ENCODE measurements at regions of chr7 and their contacts with region 1.

Region 1: DNA sequence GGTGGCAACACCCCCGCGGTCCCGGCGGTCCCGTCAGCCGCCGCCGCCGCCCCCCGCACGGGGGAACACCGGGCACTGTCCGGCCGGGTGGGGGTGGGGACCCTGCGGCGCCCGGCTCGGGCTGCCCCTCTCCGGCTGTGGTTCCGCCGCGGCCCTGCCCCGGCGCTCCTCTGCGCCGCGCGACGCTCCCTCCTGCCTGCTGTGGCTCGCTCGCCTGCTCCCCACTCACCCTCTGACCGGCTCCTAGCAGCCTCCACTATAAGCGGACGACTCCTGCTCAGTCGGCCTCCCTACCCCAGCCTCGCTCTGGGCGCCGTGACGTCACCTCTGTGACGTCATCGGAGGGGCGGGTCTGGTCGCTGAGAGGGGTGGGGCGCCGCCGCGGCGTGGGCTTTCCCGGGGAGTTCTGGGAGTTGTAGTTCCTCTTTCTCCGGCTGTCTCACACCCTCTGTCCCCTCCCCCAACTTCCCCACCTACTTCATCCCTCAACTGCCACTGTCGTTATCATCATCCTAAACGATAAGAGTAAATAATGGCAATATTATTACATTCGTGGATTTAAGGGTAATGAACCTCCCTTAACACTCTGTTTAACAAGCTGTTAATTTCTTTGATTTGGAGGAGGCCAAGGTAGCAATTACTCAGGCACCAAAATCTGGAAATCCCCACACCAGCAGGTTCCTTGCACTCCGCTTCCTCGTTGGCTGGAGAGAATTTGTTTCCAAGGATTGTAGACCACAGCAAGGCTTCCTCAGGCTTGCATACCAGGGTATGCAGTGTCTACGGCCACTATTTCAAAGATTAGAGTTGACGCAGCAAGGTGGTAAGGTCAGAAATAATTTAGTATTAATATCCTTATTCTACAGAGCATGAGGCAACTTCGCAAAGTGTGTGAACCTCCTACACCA is at the start of gene UBE2H:
- DNase-seq: peak; percentile 83
- H3K4me3 Mint-ChIP-seq: peak within 1 kb of the TSS; percentile 98
- H3K27ac Mint-ChIP-seq: peak within 1 kb of the TSS; percentile 100
- H3K4me1 Mint-ChIP-seq: peaks cover 10% of the 10 kb centered on the region
- H3K27me3 Mint-ChIP-seq: peaks cover 20% of the 10 kb centered on the region
- total RNA-seq, gene UBE2H: 27.1 TPM in 2 replicates

Region 2: DNA sequence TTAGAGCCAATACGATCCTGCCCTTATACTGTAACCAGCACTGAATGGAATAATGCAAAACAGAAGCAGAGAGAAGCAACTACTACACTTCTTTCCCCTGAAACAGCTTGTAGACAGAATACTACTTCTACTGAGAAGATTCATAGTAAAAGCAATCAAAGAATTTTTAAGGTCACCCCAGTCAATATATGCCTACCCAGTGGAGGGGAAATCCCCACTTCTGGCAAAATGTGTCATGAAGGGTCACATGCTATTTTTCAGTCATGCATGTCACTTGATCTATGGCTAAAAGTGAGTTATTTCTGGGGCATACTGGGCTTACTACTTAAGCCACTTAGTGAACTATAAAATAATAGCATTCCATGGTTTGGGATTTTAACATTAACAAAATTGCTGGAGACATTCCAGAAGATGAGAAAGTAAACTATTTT is 989.6 kb before region 1 on chr7:
- intact Hi-C with region 1: loop called (anchors 1 kb)
- DNase-seq: peak; percentile 34
- H3K4me3 Mint-ChIP-seq: peak overlapping the region; percentile 57
- H3K27ac Mint-ChIP-seq: peak overlapping the region; percentile 72
- H3K4me1 Mint-ChIP-seq: peaks cover 43% of the 10 kb centered on the region
- H3K27me3 Mint-ChIP-seq: no peaks in the 10 kb centered on the region

Region 3: DNA sequence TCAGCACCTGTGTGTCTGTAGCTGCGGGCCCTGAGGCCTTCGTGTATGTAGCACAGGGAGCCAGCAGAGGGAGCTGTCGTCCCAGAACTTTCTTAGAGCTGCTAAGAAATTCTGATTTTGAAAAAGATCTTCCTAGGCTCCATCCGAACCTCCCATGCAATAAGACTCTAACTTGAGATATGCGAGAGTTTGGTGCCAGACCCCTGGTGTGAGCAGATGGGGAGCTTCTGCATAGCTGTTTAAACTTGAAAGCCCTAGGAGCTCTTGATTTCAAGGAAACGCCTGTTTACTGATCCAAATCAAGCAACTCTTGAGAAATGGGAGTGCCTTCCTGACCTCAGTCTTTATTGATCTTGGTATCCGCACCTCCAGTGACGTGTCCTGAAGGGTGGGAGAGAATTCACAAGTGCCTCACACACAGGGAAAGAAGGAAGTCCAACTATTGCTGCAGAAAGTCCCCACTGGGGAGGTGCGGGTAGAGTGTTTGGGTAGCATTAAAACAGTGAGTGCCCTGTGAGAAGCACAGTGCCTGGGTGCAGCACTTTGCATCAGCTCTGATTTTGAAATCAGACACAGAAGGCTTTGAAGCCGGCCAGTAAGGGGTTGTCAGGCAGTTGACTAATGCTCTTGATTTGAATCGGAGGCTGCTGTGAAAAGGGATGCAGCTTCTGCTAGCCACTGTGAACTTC is 585.1 kb before region 1 on chr7:
- intact Hi-C with region 1: loop called (anchors 5 kb)
- DNase-seq: peak; percentile 68
- H3K4me3 Mint-ChIP-seq: peak overlapping the region; percentile 73
- H3K27ac Mint-ChIP-seq: peak overlapping the region; percentile 88
- H3K4me1 Mint-ChIP-seq: peaks cover 58% of the 10 kb centered on the region
- H3K27me3 Mint-ChIP-seq: no peaks in the 10 kb centered on the region

Region 4: GRCh38 chr7:129762438-129762837 is 190.5 kb before region 1 on chr7:
- intact Hi-C with region 1: no loop called
- DNase-seq: no peak
- H3K4me3 Mint-ChIP-seq: no peak overlapping the region
- H3K27ac Mint-ChIP-seq: no peak overlapping the region
- H3K4me1 Mint-ChIP-seq: no peaks in the 10 kb centered on the region
- H3K27me3 Mint-ChIP-seq: peaks cover 2% of the 10 kb centered on the region

Region 5: DNA sequence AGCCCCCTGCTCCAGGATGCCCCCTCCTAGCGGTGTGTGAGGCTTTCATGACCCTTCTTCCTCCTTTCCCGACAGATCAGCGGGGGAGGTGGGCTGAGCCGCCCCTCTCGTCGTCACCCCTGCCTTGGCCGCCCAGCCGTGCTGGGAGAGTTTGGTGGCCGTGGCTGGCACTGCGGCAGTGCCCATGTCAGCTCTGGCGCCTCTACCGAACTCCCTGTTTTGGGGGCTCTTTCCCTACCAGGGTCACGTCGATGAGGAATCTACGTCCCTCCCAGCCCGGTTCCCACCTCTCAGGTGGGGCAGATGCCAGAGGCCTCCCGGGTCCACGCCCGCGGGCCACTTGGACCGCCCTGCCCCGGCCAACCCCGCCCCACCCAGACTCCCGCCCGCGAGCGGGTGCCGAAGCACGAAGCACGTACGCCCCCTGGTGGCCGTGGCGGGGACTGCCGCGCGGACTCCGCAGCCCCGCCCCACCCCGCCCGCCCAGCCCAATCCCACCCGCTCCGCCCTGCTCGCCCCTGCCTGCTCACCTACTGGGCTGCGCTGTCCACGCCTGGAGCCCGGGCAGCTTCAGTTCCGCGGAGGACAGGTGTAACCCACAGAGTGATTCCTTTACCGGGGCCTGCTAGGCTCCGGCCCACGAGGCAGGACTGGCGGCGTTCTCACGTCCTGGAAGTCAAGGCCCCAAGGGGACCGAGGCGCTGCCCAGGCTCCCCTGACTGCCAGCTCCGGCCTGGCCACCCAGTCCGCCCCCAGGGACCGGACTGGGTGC is 127.2 kb before region 1 on chr7:
- intact Hi-C with region 1: loop called (anchors 1 kb)
- DNase-seq: peak; percentile 83
- H3K4me3 Mint-ChIP-seq: peak overlapping the region; percentile 89
- H3K27ac Mint-ChIP-seq: peak overlapping the region; percentile 67
- H3K4me1 Mint-ChIP-seq: peaks cover 14% of the 10 kb centered on the region
- H3K27me3 Mint-ChIP-seq: no peaks in the 10 kb centered on the region

Region 6: GRCh38 chr7:129875745-129876411 is 77.0 kb before region 1 on chr7:
- intact Hi-C with region 1: no loop called
- DNase-seq: no peak
- H3K4me3 Mint-ChIP-seq: no peak overlapping the region
- H3K27ac Mint-ChIP-seq: no peak overlapping the region
- H3K4me1 Mint-ChIP-seq: peaks cover 29% of the 10 kb centered on the region
- H3K27me3 Mint-ChIP-seq: no peaks in the 10 kb centered on the region

Region 7: GRCh38 chr7:130050773-130051125 is 97.8 kb after region 1 on chr7:
- intact Hi-C with region 1: loop called (anchors 1 kb)
- DNase-seq: no peak
- H3K4me3 Mint-ChIP-seq: peak overlapping the region; percentile 99
- H3K27ac Mint-ChIP-seq: peak overlapping the region; percentile 97
- H3K4me1 Mint-ChIP-seq: peaks cover 13% of the 10 kb centered on the region
- H3K27me3 Mint-ChIP-seq: peaks cover 3% of the 10 kb centered on the region

Region 8: DNA sequence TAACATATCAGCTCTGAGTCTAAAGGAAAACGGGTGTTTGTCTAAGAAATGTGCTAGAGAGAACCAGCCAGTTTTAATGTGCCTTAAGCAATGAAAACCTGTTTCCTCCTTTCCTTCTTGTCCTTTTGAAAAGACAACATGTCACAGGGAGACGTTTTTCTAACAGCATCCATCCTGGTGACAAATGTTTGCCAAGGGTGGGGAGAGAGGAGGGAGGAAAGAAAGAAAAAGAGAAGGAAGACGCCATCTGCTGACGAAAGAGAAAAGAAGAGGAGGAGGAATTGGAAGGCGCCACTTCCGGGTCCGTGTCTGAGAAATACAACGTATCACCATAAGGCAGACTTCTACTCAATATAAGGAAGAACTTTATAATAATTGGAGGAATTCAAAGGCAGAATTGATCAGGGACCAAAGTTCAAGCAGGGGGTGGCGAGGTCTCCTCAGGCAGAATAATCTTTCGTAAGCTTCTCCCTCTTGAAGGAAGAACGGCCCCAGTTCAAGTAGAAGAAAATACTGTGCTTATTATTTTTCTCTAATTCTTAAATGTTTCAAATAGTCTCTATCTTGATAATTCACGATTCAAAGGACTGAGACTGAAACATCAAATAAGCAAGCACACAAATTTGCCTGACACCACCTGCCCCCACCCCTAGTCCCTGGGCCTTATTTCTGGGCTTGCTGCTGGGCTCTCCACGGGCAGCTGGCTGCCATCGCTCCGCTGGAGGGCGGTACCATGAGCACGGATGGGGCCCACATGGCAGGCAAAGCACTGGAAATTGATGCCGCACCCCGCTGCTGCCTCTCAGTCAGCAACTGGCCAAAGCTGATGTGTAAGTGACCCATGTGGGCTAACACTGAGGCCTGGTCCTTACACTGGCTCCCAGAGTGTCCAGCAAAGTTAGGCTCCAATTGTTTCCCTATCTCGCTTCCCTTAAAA is 1054.8 kb after region 1 on chr7:
- intact Hi-C with region 1: loop called (anchors 5 kb)
- DNase-seq: peak; percentile 53
- H3K4me3 Mint-ChIP-seq: peak overlapping the region; percentile 68
- H3K27ac Mint-ChIP-seq: peak overlapping the region; percentile 89
- H3K4me1 Mint-ChIP-seq: peaks cover 75% of the 10 kb centered on the region
- H3K27me3 Mint-ChIP-seq: no peaks in the 10 kb centered on the region